ENCODE measurements at regions of chr7 and their contacts with region 1.

Region 1: DNA sequence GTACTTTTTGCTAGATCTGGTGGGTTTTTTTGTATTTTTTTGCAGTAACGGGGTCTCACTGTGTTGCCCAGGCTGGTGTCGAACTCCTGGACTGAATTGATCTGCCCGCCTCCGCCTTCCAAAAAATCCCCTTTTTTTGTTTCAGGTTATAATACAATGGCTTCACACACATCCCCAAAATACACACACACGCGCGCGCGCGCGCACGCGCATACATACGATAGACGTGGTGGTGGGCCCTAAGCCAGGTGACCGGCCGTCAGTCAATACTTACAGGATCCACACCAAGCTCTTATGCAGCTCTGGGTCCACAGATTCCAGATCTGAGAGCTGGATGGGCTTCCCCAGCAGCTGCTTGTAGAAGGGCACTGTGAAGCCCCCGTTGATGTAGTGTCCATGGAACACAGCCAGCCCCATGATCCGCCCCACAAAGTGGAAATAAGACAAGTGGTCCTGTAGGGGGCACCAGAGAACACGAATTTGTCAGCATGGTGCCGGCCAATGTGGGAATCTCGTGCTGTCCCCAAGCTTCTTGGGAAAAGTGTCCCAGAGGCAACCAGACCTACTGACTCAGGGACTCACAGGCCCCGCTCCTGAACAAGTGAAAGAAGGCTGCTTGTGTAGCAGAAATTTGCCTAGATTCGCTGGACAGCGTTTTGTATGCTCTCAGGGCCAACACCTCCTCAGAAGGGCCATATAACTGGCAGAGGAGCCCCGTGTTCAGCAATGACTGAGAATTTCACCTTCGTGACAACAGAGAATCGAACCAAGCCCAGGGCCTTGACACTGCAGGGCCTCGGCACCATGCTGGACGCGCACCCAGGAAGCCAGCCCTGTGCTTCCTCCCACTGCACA is 103.6 kb downstream of the SMURF1 start:
- DNase-seq: peak; percentile 68 to 89 (median 72)
- ATAC-seq: peak; percentile 81
- H3K4me3 ChIP-seq: no peak overlapping the region
- H3K4me1 ChIP-seq: peaks cover 15% of the 10 kb centered on the region
- CTCF ChIP-seq: no peak

Region 2: GRCh38 chr7:99143853-99144672 is 103.7 kb after region 1 on chr7 and contains the start of gene SMURF1:
- intact Hi-C with region 1: loop called in 1 of 2 experiments (anchors 10 kb)
- DNase-seq: peak; percentile 76 to 85 (median 84)
- ATAC-seq: peak; percentile 72
- H3K4me3 ChIP-seq: peak within 1 kb of the TSS; percentile 97
- H3K4me1 ChIP-seq: peaks cover 2% of the 10 kb centered on the region
- CTCF ChIP-seq: no peak
- total RNA-seq, gene SMURF1: 28.4 to 36.0 (median 31.2) TPM

Region 3: DNA sequence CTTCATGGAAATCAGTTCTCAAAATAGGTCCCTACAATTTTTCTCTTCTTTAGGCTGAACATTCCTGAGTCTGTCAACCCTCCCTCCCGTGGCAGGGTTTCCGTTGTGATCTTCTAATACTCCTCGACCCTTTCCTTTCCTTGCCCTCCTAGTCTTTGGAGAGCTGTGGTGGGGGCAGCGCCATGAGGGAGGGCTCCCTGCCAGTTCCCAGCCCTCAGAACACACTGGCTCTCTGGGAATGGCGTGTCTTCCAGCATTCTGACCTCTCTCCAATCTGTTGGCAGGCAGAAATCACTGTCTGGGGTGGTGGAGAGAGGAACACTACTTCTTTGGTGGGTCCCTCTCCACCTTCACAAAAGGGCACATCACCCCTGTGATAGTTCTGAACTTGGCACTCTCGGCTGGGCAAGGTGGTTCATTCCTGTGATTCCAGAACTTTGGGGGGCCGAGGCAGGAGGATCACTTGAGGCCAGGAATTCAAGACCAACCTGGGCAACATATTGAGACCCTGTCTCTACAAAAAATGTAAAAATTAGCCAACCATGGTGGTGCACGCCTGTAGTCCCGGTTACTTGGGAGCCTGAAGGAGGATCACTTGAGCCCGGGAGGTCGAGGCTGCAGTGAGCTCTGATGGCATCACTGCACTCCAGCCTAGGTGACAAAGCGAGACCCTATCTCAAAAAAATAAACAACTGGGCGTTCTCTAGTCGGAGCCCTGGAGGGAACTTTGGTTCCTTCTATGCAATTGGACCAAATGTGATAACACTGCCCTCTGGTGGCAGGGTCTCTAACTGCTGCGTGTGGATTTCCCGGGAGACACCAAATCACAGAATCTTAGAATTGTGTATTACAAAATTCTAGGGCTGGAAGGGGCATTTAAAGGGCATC is 272.2 kb after region 1 on chr7:
- intact Hi-C with region 1: loop called (anchors 5 kb)
- DNase-seq: peak in 2 of 3 donors; percentile 73 to 92
- ATAC-seq: peak; percentile 78
- H3K4me3 ChIP-seq: no peak overlapping the region
- H3K4me1 ChIP-seq: peaks cover 7% of the 10 kb centered on the region
- CTCF ChIP-seq: peak; percentile 64

Measured in mucosa of descending colon (tissue), 3 donors.